WTC11 (cell line): ENCODE measurements at regions of chr1 and their contacts with region 1.

Region 1: GRCh38 chr1:20574686-20575540 is 14.0 kb upstream of the CDA start:
- DNase-seq: peak; percentile 90
- ATAC-seq: peak; percentile 98
- H3K4me3 Mint-ChIP-seq: no peak overlapping the region
- H3K27ac Mint-ChIP-seq: no peak overlapping the region
- H3K4me1 Mint-ChIP-seq: no peaks in the 10 kb centered on the region
- H3K27me3 Mint-ChIP-seq: peaks cover 38% of the 10 kb centered on the region
- CTCF ChIP-seq: peak; percentile 76

Region 2: DNA sequence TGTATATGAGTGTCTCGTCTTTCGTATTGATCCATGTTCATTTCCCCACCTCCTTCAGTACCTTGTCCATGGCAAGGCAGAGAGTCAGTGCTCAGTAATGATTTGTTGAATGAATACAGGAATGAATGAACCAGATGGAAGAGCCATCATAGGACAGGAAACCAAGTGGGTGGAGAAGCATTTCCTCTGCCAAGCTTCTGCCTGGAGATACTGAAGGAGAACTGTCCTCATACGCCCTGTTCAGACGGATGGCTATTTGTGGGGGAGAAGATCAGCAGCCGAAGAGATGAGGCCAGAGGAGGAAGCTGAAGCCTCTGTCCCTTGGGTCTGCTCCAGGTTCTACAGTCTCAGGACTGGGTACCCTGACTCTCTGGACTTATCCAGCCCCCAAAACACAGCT is 16.7 kb before region 1 on chr1:
- CTCF ChIA-PET with region 1: interaction called, 15 read pairs
- POLR2A ChIA-PET with region 1: no interaction called
- DNase-seq: no peak
- ATAC-seq: no peak
- H3K4me3 Mint-ChIP-seq: no peak overlapping the region
- H3K27ac Mint-ChIP-seq: no peak overlapping the region
- H3K4me1 Mint-ChIP-seq: peaks cover 8% of the 10 kb centered on the region
- H3K27me3 Mint-ChIP-seq: peaks cover 19% of the 10 kb centered on the region
- CTCF ChIP-seq: no peak

Region 3: GRCh38 chr1:20609541-20609940 is 34.6 kb after region 1 on chr1:
- CTCF ChIA-PET with region 1: interaction called, 14 read pairs
- POLR2A ChIA-PET with region 1: no interaction called
- DNase-seq: no peak
- ATAC-seq: 0 out of 2 replicates have a peak, but pooled peaks have one; percentile 16
- H3K4me3 Mint-ChIP-seq: no peak overlapping the region
- H3K27ac Mint-ChIP-seq: no peak overlapping the region
- H3K4me1 Mint-ChIP-seq: peaks cover 28% of the 10 kb centered on the region
- H3K27me3 Mint-ChIP-seq: no peaks in the 10 kb centered on the region
- CTCF ChIP-seq: no peak

Region 4: DNA sequence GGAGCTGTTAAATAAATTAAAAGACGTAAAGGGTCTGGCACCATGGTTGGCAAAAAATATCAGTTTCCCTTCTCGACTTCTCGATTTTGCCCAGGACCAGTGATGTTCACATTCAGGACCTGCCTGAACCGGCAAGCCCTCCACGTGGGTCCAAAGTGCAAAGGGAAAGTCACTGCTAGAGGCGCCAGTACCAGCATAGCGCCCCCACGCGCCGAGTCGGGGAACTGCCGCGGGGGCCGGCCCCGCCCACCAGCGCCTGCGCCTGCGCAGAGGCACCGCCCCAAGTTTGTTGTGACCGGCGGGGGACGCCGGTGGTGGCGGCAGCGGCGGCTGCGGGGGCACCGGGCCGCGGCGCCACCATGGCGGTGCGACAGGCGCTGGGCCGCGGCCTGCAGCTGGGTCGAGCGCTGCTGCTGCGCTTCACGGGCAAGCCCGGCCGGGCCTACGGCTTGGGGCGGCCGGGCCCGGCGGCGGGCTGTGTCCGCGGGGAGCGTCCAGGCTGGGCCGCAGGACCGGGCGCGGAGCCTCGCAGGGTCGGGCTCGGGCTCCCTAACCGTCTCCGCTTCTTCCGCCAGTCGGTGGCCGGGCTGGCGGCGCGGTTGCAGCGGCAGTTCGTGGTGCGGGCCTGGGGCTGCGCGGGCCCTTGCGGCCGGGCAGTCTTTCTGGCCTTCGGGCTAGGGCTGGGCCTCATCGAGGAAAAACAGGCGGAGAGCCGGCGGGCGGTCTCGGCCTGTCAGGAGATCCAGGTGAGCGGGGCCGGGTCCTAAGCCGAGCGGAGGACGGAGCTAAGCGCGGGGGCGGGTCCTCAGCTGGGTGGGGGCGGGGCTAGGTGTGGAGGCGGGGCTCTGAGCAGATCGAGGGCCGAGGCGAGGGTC is 58.5 kb after region 1 on chr1 and contains the start of gene PINK1:
- CTCF ChIA-PET with region 1: interaction called, 153 read pairs
- POLR2A ChIA-PET with region 1: interaction called, 9 read pairs
- DNase-seq: peak; percentile 90
- ATAC-seq: peak; percentile 89
- H3K4me3 Mint-ChIP-seq: peak within 1 kb of the TSS; percentile 93
- H3K27ac Mint-ChIP-seq: peak within 1 kb of the TSS; percentile 98
- H3K4me1 Mint-ChIP-seq: peaks cover 13% of the 10 kb centered on the region
- H3K27me3 Mint-ChIP-seq: peaks cover 15% of the 10 kb centered on the region
- CTCF ChIP-seq: peak; percentile 99
- total RNA-seq, gene PINK1: 34.7 to 47.7 TPM (median 35.1 TPM) in 3 replicates

Region 5: GRCh38 chr1:20661207-20662109 is 86.5 kb after region 1 on chr1 and contains the start of gene DDOST:
- CTCF ChIA-PET with region 1: interaction called, 23 read pairs
- POLR2A ChIA-PET with region 1: no interaction called
- DNase-seq: peak; percentile 96
- ATAC-seq: peak; percentile 98
- H3K4me3 Mint-ChIP-seq: peak within 1 kb of the TSS; percentile 99
- H3K27ac Mint-ChIP-seq: peak within 1 kb of the TSS; percentile 98
- H3K4me1 Mint-ChIP-seq: peaks cover 22% of the 10 kb centered on the region
- H3K27me3 Mint-ChIP-seq: no peaks in the 10 kb centered on the region
- CTCF ChIP-seq: no peak
- total RNA-seq, gene DDOST: 299 to 306 TPM (median 300 TPM) in 3 replicates